Activated CD4-positive, alpha-beta memory T cell treated with anti-CD3 and anti-CD28 coated beads, Interleukin-2, amount 10 ng/mL, durations not matched to agents 7 days and 5 days (primary cell): ENCODE measurements at regions of chr17 and their contacts with region 1.

Region 1: DNA sequence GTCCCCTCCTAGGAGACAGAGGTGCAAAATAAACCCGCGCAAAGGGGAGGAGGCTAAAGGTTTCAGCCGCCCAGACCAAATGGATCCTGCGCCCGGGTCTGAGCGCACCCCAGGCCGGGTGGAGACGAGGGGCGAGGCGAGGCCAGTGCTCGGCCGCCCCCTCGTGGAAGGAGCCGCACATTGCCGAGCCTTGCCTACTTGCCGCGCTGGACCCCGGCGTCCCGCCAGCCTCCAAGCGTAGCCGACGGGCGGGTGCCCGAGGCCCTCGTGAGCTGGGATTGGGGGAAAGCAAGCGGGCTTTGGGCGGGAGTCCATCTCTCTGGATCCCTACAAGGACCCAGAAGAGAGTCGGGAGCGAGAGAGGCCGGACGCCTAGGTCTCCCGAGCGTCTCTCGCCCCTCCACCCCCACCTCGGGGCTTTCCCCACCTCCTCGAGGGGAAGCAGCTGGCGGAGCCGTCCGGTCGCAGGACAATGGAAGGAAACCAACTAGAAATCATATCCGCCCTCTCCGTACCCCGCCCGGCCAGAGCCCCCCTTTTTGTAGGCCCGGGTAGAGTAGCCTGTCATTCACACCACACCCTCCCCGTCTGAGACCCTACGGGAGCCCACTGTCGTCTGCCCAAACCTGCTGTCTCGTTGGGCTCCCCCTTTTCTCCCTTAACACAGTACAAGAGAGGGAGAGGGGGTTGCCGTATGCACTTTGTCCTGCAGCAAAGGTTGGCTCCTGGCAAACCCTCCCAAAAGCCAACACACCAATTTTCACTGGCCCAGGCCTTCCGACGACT is 664 bp upstream of the BCL6B start:
- DNase-seq: peak; percentile 85
- H3K4me3 Mint-ChIP-seq: peak overlapping the region; percentile 48
- H3K27ac Mint-ChIP-seq: peak overlapping the region; percentile 54
- H3K4me1 Mint-ChIP-seq: peaks cover 65% of the 10 kb centered on the region
- H3K27me3 Mint-ChIP-seq: peaks cover 1% of the 10 kb centered on the region

Region 2: GRCh38 chr17:6913608-6914443 is 108.4 kb before region 1 on chr17:
- CTCF ChIA-PET with region 1: interaction called, 30 read pairs
- POLR2A ChIA-PET with region 1: interaction called, 4 read pairs
- DNase-seq: peak; percentile 74
- H3K4me3 Mint-ChIP-seq: peak overlapping the region; percentile 41
- H3K27ac Mint-ChIP-seq: no peak overlapping the region
- H3K4me1 Mint-ChIP-seq: peaks cover 37% of the 10 kb centered on the region
- H3K27me3 Mint-ChIP-seq: peaks cover 52% of the 10 kb centered on the region

Region 3: GRCh38 chr17:7004398-7005253 is 17.6 kb before region 1 on chr17:
- CTCF ChIA-PET with region 1: interaction called, 28 read pairs
- POLR2A ChIA-PET with region 1: interaction called, 5 read pairs
- DNase-seq: peak; percentile 36
- H3K4me3 Mint-ChIP-seq: no peak overlapping the region
- H3K27ac Mint-ChIP-seq: peak overlapping the region; percentile 31
- H3K4me1 Mint-ChIP-seq: peaks cover 27% of the 10 kb centered on the region
- H3K27me3 Mint-ChIP-seq: no peaks in the 10 kb centered on the region

Region 4: GRCh38 chr17:7035591-7036368 is 13.6 kb after region 1 on chr17 and contains the start of gene SLC16A13:
- CTCF ChIA-PET with region 1: interaction called, 20 read pairs
- POLR2A ChIA-PET with region 1: interaction called, 70 read pairs
- DNase-seq: peak; percentile 99
- H3K4me3 Mint-ChIP-seq: peak within 1 kb of the TSS; percentile 85
- H3K27ac Mint-ChIP-seq: peak within 1 kb of the TSS; percentile 96
- H3K4me1 Mint-ChIP-seq: peaks cover 60% of the 10 kb centered on the region
- H3K27me3 Mint-ChIP-seq: no peaks in the 10 kb centered on the region
- total RNA-seq, gene SLC16A13: 26.8 to 28.9 TPM